HEK293T (cell line): ENCODE measurements at regions of chr3 and their contacts with region 1.

Region 1: DNA sequence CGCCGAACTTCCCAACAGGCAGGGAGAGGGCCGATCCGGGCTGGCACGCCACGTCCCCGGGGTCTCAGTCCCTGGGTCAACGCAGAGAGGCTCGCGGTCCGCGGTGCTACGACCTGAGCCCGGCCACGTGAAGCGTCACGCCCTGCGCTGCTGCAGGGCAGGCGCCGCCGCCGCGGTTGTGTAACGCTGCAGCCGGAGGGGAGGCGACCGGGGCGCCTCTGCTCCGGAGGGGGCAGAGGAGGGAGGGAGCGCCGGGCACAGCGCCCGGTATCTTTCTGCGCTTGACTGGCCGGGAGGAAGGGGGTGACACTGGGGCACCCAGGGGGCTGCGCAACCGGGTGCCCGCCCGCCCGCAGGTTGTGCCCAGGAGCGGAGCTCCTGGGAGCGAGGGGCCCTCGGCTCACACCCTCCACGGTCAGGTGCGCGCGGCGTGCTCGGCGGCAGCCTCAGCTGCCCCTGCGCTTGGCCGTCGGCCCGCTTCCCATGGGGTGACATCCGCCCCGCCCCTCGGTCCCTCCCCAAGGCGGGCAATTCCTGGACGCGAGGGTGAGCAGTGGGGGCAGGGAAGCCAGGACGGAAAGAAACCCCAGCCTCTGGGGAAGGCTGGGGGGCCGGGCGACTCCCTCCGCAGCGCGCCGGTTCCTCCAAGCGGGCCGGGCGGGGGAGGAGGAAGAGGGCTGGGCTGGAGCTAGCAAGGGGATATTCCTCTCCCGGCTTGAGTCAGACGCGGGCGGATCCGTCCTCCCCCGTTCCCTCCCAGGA is 852 bp upstream of the BHLHE40 start:
- DNase-seq: peak; percentile 84

Region 2: DNA sequence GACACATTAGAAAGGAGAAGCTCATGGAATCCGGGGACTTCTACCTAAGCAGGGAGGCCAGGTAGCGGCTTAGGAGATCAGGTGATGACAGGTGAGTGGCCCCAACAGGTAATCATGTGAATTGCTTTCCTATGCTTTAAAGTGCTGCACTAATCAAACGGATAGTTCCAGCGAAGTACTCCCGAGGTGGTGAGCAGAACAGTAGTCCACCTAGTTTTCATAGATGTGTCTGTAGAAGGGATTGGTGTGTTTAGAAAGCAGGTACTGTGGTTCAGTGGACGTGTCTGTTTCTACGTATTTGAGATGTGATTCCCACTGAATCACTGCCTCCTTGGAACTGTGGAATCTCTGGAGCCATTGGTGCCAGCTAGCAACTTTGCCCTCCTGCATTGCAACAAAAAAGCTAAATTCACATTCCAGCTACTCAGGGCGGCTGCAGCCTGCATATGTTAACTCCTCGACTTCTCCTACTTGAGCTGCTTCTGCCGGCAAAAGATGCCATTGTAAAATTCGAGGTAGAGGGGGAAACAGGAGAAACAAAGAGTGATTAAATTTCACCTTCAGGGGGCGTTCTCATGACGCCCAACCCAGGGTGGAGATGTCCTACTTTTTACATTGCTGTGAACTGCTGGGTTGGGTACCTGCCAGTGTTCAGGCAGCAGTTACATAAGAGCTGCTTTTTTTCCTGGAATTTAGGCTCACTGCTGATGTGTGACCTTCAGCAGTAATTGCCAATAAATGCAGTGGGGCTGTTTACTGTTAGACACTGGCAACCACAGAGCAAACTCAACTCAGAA is 257.9 kb before region 1 on chr3:
- CTCF ChIA-PET with region 1: interaction called, 23 read pairs
- POLR2A ChIA-PET with region 1: interaction called, 6 read pairs
- DNase-seq: peak; percentile 38

Region 3: DNA sequence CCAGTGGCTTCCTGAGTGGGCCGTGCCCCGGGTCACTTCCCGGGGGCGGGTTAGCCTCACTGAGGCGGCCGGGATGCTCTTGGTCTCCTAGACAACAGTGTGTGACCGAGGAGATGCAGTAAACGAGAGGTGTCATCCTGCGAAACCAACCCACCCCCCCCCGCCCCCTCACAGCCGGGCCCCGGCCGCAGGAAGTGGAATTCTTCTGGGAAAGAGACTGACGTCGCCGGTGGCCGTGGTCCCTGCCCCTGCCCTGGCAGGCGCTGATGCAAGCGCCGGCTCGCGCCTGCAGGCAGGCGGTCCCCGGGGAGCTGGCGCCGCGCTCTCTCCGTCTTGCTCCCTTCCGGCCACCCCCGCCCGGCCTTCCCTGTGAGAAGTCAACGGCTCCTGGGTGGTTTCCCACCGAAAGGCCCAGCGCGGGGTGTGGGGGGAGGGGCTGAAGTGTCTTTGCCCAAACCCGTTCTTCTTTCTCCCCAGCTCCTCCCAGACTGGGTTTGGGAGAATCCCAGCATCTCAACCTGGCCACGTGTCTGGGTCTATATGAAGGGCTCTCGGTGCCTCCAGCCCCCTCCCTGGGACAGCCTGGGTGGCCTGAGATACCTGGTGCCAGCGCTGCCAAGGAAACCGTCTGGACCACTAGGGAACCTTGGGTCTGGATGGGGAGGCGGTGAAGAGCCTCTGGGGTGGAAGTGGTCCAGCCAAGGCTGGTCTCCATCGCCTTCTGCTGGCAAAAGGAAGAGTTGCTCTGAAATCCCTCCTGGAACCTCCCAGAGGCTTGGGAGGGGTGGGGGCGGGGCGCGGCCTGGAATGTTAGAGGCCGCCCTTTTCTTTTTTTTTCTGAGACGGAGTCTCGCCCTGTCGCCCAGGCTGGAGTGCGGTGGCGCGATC is 48.2 kb after region 1 on chr3:
- CTCF ChIA-PET with region 1: interaction called, 9 read pairs
- POLR2A ChIA-PET with region 1: interaction called, 159 read pairs
- DNase-seq: peak; percentile 88